ENCODE measurements at regions of chrX and their contacts with region 1.

Region 1: DNA sequence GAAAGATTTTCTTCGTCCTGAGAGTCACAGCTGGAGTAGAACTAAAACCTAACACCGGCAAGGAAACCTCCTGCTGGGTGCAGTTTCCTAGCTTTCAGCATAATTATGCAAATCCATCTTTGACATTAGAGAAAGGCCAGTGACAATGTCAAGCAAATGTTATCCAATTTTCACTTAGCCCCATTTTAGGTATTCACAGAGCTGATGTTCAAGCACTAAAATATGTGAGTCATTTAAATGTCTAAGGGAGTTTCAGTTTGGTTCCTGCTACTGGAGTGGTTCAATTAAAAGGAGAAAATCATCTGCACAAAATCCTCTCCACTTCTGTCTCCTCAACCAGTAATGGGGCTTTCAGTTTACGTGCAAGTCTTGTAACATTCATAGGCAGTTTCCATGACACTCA is 37.1 kb upstream of the AMOT start:
- DNase-seq: no peak
- ATAC-seq: no peak
- H3K4me3 ChIP-seq: no peak overlapping the region
- H3K27ac ChIP-seq: no peak overlapping the region
- H3K4me1 ChIP-seq: no peaks in the 10 kb centered on the region
- H3K27me3 ChIP-seq: no peaks in the 10 kb centered on the region
- CTCF ChIP-seq: no peak

Region 2: DNA sequence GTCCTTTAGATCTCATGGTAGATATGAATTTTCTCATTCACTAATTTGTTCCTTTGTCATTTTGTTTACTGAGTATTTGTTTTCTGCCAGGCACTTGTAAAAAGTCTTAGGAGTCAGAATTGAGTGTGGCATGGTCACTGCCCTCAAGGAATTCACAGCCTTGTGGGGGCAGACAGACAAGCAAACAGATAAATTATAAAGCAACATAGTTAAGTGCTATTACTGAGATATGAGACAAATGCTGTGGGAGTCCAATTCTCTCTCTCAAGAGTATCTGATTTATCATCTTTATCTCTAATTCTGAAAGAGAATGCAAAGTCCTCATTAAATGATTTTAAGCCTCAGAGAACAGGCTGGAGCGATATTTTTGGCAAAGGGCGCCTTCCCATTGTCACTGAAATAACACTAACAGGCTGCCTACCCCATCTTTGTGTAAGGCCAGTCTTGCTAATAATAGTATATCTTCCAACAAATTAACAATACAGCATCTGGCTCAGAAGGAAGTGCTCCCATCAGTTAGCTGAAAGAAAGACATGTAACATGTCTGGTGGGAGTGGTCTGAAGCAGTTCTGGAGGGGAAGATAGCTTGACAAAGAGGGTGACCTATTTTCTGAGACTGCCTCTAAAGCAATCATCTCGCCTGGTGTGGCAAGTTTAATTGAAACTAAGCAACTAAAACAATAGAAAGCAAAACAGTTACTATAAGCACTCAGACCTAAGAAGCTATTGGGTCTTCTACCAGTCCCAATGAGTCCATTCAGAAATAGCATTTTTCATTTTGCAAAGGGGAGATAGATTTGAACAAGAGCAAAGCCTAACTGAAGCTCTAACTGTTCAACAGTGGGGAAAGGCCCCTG is 24.3 kb after region 1 on chrX:
- CTCF ChIA-PET with region 1: no interaction called
- POLR2A ChIA-PET with region 1: interaction called, 12 read pairs
- in situ Hi-C with region 1: no loop called
- intact Hi-C with region 1: no loop called
- DNase-seq: no peak
- ATAC-seq: no peak
- H3K4me3 ChIP-seq: no peak overlapping the region
- H3K27ac ChIP-seq: no peak overlapping the region
- H3K4me1 ChIP-seq: no peaks in the 10 kb centered on the region
- H3K27me3 ChIP-seq: no peaks in the 10 kb centered on the region
- CTCF ChIP-seq: no peak

Measured in Panc1 (cell line).